H1 (cell line): ENCODE measurements at regions of chr7 and their contacts with region 1.

Region 1: DNA sequence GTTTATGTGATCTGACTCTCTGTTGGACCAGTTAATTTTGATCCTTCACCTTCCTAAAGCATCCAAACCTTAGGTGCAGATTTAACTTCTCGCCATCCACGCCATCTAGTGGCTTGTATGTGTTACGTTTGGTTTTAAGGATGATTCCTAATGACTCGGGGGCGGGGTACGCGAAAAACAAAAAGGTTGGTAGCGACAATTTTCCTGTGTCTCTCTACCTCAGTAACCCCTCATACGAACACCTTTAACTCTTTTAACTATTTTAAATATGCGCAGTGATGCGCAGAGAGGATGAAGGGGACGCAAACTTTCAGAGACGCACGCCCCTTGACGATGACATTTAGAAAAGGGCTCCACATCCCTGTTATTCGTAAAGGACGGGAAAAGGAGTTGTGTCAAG is 714 bp upstream of the KCND2 start:
- DNase-seq: peak in 1 of 2 experiments; percentile 54
- H3K4me3 ChIP-seq: peak overlapping the region; percentile 61 to 93 (median 80)
- H3K27ac ChIP-seq: no peak overlapping the region
- H3K4me1 ChIP-seq: peaks cover 3 to 11% (median 7%) of the 10 kb centered on the region in 4 experiments
- H3K27me3 ChIP-seq: peaks cover 0 to 15% (median 8%) of the 10 kb centered on the region in 4 experiments; a peak in 5 of 7 replicates
- CTCF ChIP-seq: peak in 2 of 3 experiments; percentile 60 to 80; a peak in 3 of 4 replicates
- EP300 ChIP-seq: no peak
- POLR2A ChIP-seq: no peak
- RAD21 ChIP-seq: peak; percentile 86 to 87

Region 2: GRCh38 chr7:119935418-119936025 is 336.7 kb before region 1 on chr7:
- CTCF ChIA-PET with region 1: interaction called, 11 read pairs
- POLR2A ChIA-PET with region 1: interaction called, 3 read pairs
- DNase-seq: no peak
- H3K4me3 ChIP-seq: no peak overlapping the region
- H3K27ac ChIP-seq: no peak overlapping the region
- H3K4me1 ChIP-seq: no peaks in the 10 kb centered on the region
- H3K27me3 ChIP-seq: no peaks in the 10 kb centered on the region
- CTCF ChIP-seq: peak in 1 of 3 experiments; percentile 22; a peak in 2 of 4 replicates
- EP300 ChIP-seq: no peak
- POLR2A ChIP-seq: no peak
- RAD21 ChIP-seq: peak in 1 of 2 experiments; percentile 49; a peak in 3 of 4 replicates

Region 3: GRCh38 chr7:120014920-120015465 is 257.3 kb before region 1 on chr7:
- CTCF ChIA-PET with region 1: no interaction called
- POLR2A ChIA-PET with region 1: no interaction called
- DNase-seq: no peak
- H3K4me3 ChIP-seq: no peak overlapping the region; a peak in 1 of 8 replicates
- H3K27ac ChIP-seq: peak overlapping the region; percentile 54; the same call in 1 of the 2 replicates
- H3K4me1 ChIP-seq: peaks cover 0 to 3% (median under 1%) of the 10 kb centered on the region in 4 experiments; a peak in 3 of 7 replicates
- H3K27me3 ChIP-seq: no peaks in the 10 kb centered on the region
- CTCF ChIP-seq: no peak
- EP300 ChIP-seq: no peak
- POLR2A ChIP-seq: no peak
- RAD21 ChIP-seq: no peak

Region 4: GRCh38 chr7:120554960-120555571 is 282.8 kb after region 1 on chr7:
- CTCF ChIA-PET with region 1: interaction called, 11 read pairs
- POLR2A ChIA-PET with region 1: interaction called, 3 read pairs
- DNase-seq: peak in 1 of 2 experiments; percentile 56
- H3K4me3 ChIP-seq: no peak overlapping the region
- H3K27ac ChIP-seq: no peak overlapping the region
- H3K4me1 ChIP-seq: peaks cover 0 to 10% (median 5%) of the 10 kb centered on the region in 4 experiments; a peak in 4 of 7 replicates
- H3K27me3 ChIP-seq: no peaks in the 10 kb centered on the region
- CTCF ChIP-seq: peak in 2 of 3 experiments; percentile 71 to 79; a peak in 3 of 4 replicates
- EP300 ChIP-seq: no peak
- POLR2A ChIP-seq: no peak
- RAD21 ChIP-seq: peak; percentile 96 to 99